Naive thymus-derived CD4-positive, alpha-beta T cell (primary cell): ENCODE measurements at regions of chr3 and their contacts with region 1.

Region 1: DNA sequence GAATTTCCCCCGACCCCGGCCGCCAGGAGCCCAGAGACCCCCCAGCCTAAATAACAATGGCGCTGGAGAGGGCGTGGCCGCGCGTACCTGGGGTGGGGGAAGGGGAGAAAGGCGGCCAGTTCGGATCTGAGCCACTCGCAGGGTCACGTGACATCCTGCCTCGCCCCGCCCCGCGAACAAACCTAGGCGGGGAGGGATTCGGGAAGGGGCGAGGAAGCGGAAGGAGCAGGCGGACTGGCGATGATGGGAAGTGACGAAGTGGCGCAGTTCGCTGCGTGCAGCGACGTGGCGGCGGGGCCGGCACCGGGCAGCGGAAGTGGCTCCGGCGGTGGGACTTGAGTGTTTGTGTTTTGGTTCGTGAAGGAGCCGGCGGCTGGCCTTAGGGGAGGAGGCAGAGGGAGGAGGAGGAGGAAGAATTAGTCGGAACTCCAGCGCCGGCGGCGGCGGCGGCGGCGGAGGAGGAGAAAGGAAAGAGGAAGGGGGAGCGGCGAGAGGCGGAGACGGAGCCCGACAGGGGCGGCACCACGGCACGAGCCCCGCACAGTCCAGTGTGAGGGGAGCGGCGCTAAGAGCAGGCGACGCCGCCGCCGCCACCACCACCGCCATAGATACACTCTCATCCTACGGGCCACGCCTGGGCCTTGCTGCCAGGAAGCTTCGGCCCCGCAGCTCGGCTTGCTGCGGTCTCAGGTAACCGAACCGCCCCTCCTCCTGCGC is at the start of gene RAB5A:
- DNase-seq: peak; percentile 87 to 98 (median 96)
- ATAC-seq: peak; percentile 89
- H3K4me3 ChIP-seq: peak within 1 kb of the TSS; percentile 88
- H3K4me3 Mint-ChIP-seq: peak within 1 kb of the TSS; percentile 91 to 99 (median 97)
- H3K27ac ChIP-seq: peak within 1 kb of the TSS; percentile 94
- H3K27ac Mint-ChIP-seq: peak within 1 kb of the TSS; percentile 98 to 100 (median 99)
- H3K4me1 ChIP-seq: peaks cover 19 to 27% of the 10 kb centered on the region in 2 donors
- H3K4me1 Mint-ChIP-seq: peaks cover 25 to 68% (median 59%) of the 10 kb centered on the region in 7 donors
- H3K27me3 ChIP-seq: no peaks in the 10 kb centered on the region
- H3K27me3 Mint-ChIP-seq: peaks cover 0 to 3% (median 0%) of the 10 kb centered on the region in 5 donors
- total RNA-seq, gene RAB5A: 50.3 to 92.2 (median 58.9) TPM

Region 2: GRCh38 chr3:19107703-19108102 is 839.3 kb before region 1 on chr3:
- CTCF ChIA-PET with region 1: no interaction called
- POLR2A ChIA-PET with region 1: no interaction called
- intact Hi-C with region 1: loop called in 1 of 2 experiments (anchors 5 kb)
- DNase-seq: no peak
- ATAC-seq: no peak
- H3K4me3 ChIP-seq: no peak overlapping the region
- H3K4me3 Mint-ChIP-seq: no peak overlapping the region
- H3K27ac ChIP-seq: no peak overlapping the region
- H3K27ac Mint-ChIP-seq: no peak overlapping the region
- H3K4me1 ChIP-seq: no peaks in the 10 kb centered on the region
- H3K4me1 Mint-ChIP-seq: peaks cover 0 to 7% (median 0%) of the 10 kb centered on the region in 7 donors
- H3K27me3 ChIP-seq: no peaks in the 10 kb centered on the region
- H3K27me3 Mint-ChIP-seq: peaks cover 0 to 32% (median 10%) of the 10 kb centered on the region in 5 donors

Region 3: GRCh38 chr3:19146685-19147650 is 800.0 kb before region 1 on chr3:
- CTCF ChIA-PET with region 1: no interaction called
- POLR2A ChIA-PET with region 1: no interaction called
- intact Hi-C with region 1: loop called in 1 of 2 experiments (anchors 2 kb)
- DNase-seq: peak; percentile 25 to 88 (median 61)
- ATAC-seq: peak; percentile 75
- H3K4me3 ChIP-seq: peak overlapping the region; percentile 72
- H3K4me3 Mint-ChIP-seq: peak overlapping the region; percentile 90 to 95 (median 93)
- H3K27ac ChIP-seq: peak overlapping the region; percentile 59
- H3K27ac Mint-ChIP-seq: peak overlapping the region; percentile 25 to 94 (median 84)
- H3K4me1 ChIP-seq: peaks cover 3 to 17% of the 10 kb centered on the region in 2 donors
- H3K4me1 Mint-ChIP-seq: peaks cover 8 to 28% (median 21%) of the 10 kb centered on the region in 7 donors
- H3K27me3 ChIP-seq: no peaks in the 10 kb centered on the region
- H3K27me3 Mint-ChIP-seq: peaks cover 40 to 63% (median 53%) of the 10 kb centered on the region in 5 donors

Region 4: GRCh38 chr3:19885468-19885867 is 61.5 kb before region 1 on chr3:
- CTCF ChIA-PET with region 1: no interaction called
- POLR2A ChIA-PET with region 1: no interaction called
- intact Hi-C with region 1: loop called in 1 of 2 experiments (anchors 2 kb)
- DNase-seq: peak in 6 of 9 donors; percentile 14 to 32 (median 18)
- ATAC-seq: peak; percentile 72
- H3K4me3 ChIP-seq: no peak overlapping the region
- H3K4me3 Mint-ChIP-seq: no peak overlapping the region
- H3K27ac ChIP-seq: no peak overlapping the region
- H3K27ac Mint-ChIP-seq: no peak overlapping the region
- H3K4me1 ChIP-seq: no peaks in the 10 kb centered on the region
- H3K4me1 Mint-ChIP-seq: peaks cover 0 to 7% (median 0%) of the 10 kb centered on the region in 7 donors
- H3K27me3 ChIP-seq: no peaks in the 10 kb centered on the region
- H3K27me3 Mint-ChIP-seq: peaks cover 0 to 11% (median 0%) of the 10 kb centered on the region in 5 donors

Region 5: DNA sequence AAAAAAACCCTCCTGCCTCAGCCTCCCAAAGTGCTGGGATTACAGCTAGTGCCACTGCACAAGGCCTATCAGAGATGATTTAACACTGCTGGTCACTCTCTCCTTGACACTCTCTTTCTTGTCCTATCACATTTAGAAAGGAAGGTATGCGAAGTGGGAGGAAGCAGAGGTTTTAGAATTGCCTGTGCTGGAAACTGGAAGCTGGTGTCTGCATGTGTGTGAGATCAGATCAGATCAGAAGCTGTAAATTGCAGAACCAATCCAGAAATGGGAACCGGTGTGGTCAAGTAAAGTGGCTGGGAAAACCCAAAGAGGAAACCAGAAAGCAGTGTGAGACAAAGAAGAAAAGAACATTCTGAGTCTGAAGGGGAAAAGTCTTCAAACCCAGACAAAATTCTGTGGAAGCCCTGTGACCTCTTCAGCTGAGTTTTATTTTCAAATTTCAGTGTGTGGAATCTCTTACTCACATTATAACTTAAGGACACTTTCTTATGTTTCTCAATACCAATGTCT is 15.8 kb before region 1 on chr3:
- CTCF ChIA-PET with region 1: no interaction called
- POLR2A ChIA-PET with region 1: interaction called, 3 read pairs
- intact Hi-C with region 1: loop called in 1 of 2 experiments (anchors 1 kb)
- DNase-seq: peak in 1 of 9 donors; percentile 70
- ATAC-seq: peak; percentile 86
- H3K4me3 ChIP-seq: no peak overlapping the region
- H3K4me3 Mint-ChIP-seq: peak overlapping the region in 1 of 10 donors; percentile 61
- H3K27ac ChIP-seq: no peak overlapping the region
- H3K27ac Mint-ChIP-seq: peak overlapping the region in 1 of 9 donors; percentile 14
- H3K4me1 ChIP-seq: no peaks in the 10 kb centered on the region
- H3K4me1 Mint-ChIP-seq: peaks cover 0 to 27% (median 1%) of the 10 kb centered on the region in 7 donors
- H3K27me3 ChIP-seq: peaks cover 0 to 2% of the 10 kb centered on the region in 2 donors
- H3K27me3 Mint-ChIP-seq: peaks cover 13 to 32% (median 18%) of the 10 kb centered on the region in 5 donors

Region 6: GRCh38 chr3:19972051-19972454 is 25.1 kb after region 1 on chr3:
- CTCF ChIA-PET with region 1: no interaction called
- POLR2A ChIA-PET with region 1: no interaction called
- intact Hi-C with region 1: loop called in 1 of 2 experiments (anchors 2 kb)
- DNase-seq: no peak
- ATAC-seq: no peak
- H3K4me3 ChIP-seq: no peak overlapping the region
- H3K4me3 Mint-ChIP-seq: no peak overlapping the region
- H3K27ac ChIP-seq: no peak overlapping the region
- H3K27ac Mint-ChIP-seq: peak overlapping the region in 2 of 9 donors; percentile 27 to 31
- H3K4me1 ChIP-seq: peaks cover 0 to 4% of the 10 kb centered on the region in 2 donors
- H3K4me1 Mint-ChIP-seq: peaks cover 5 to 48% (median 35%) of the 10 kb centered on the region in 7 donors
- H3K27me3 ChIP-seq: no peaks in the 10 kb centered on the region
- H3K27me3 Mint-ChIP-seq: no peaks in the 10 kb centered on the region

Region 7: GRCh38 chr3:20104167-20104661 is 157.2 kb after region 1 on chr3:
- CTCF ChIA-PET with region 1: no interaction called
- POLR2A ChIA-PET with region 1: no interaction called
- intact Hi-C with region 1: loop called in 1 of 2 experiments (anchors 1 kb)
- DNase-seq: peak in 1 of 9 donors; percentile 35
- ATAC-seq: peak; percentile 87
- H3K4me3 ChIP-seq: no peak overlapping the region
- H3K4me3 Mint-ChIP-seq: peak overlapping the region in 5 of 10 donors; percentile 19 to 63 (median 27)
- H3K27ac ChIP-seq: peak overlapping the region; percentile 13
- H3K27ac Mint-ChIP-seq: peak overlapping the region; percentile 8 to 90 (median 54)
- H3K4me1 ChIP-seq: peaks cover 8 to 52% of the 10 kb centered on the region in 2 donors
- H3K4me1 Mint-ChIP-seq: peaks cover 6 to 72% (median 33%) of the 10 kb centered on the region in 7 donors
- H3K27me3 ChIP-seq: no peaks in the 10 kb centered on the region
- H3K27me3 Mint-ChIP-seq: no peaks in the 10 kb centered on the region

Region 8: DNA sequence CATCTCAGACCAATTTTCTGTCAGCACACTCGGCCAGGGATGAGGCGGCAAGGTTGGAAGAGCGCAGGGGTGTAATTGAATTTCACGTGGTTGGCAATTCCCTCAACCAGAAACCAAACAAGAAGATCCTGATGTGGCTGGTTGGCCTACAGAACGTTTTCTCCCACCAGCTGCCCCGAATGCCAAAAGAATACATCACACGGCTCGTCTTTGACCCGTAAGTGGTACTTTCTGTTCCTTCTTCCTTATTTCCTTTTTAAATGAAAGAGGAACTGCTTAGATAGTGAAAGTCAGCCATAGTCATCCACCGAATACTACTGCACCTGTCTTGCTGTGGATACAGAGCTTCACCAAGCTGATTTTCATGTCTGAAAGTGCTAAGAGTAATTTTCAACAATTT is 178.9 kb after region 1 on chr3:
- CTCF ChIA-PET with region 1: no interaction called
- POLR2A ChIA-PET with region 1: no interaction called
- intact Hi-C with region 1: no loop called
- DNase-seq: no peak
- ATAC-seq: peak; percentile 84
- H3K4me3 ChIP-seq: no peak overlapping the region
- H3K4me3 Mint-ChIP-seq: no peak overlapping the region
- H3K27ac ChIP-seq: no peak overlapping the region
- H3K27ac Mint-ChIP-seq: peak overlapping the region in 4 of 9 donors; percentile 21 to 60 (median 45)
- H3K4me1 ChIP-seq: no peaks in the 10 kb centered on the region
- H3K4me1 Mint-ChIP-seq: peaks cover 0 to 14% (median 0%) of the 10 kb centered on the region in 7 donors
- H3K27me3 ChIP-seq: no peaks in the 10 kb centered on the region
- H3K27me3 Mint-ChIP-seq: no peaks in the 10 kb centered on the region